Ascending aorta (tissue), 2 donors: ENCODE measurements at regions of chr15 and their contacts with region 1.

Region 1: GRCh38 chr15:60179786-60180391 is 175.8 kb downstream of the FOXB1 start:
- DNase-seq: no peak
- H3K4me3 ChIP-seq: no peak overlapping the region
- H3K27ac ChIP-seq: no peak overlapping the region
- H3K4me1 ChIP-seq: no peaks in the 10 kb centered on the region
- H3K27me3 ChIP-seq: no peaks in the 10 kb centered on the region
- CTCF ChIP-seq: peak in 2 of 3 experiments; percentile 47

Region 2: GRCh38 chr15:59699810-59700431 is 480.0 kb before region 1 on chr15:
- intact Hi-C with region 1: loop called (anchors 10 kb)
- DNase-seq: no peak
- H3K4me3 ChIP-seq: no peak overlapping the region
- H3K27ac ChIP-seq: no peak overlapping the region
- H3K4me1 ChIP-seq: no peaks in the 10 kb centered on the region
- H3K27me3 ChIP-seq: no peaks in the 10 kb centered on the region
- CTCF ChIP-seq: no peak